Naive thymus-derived CD4-positive, alpha-beta T cell (primary cell): ENCODE measurements at regions of chr4 and their contacts with region 1.

Region 1: DNA sequence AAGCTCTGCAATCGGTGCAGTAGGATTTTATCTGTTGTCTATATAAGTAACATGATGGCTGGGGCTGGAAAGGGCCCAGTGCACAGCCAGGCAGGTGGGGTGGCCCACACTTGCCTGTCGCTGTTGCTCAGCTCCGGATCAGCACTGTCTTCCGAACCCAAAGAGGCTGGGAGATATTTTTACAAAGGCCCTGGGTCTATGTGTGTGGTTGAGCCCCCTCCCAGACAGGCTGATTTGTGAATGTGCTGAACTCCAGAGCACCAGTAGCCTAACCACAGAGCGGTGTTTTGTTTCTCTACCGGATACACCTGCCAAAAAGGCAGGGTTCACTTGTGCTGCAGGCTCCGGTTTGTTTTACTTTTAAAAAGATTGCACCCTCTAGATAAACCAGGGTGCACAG is 33.5 kb upstream of the CHRNA9 start:
- DNase-seq: peak in 8 of 9 donors; percentile 36 to 96 (median 92)
- ATAC-seq: peak; percentile 92
- H3K4me3 ChIP-seq: peak overlapping the region; percentile 17
- H3K4me3 Mint-ChIP-seq: peak overlapping the region; percentile 56 to 88 (median 76)
- H3K27ac ChIP-seq: peak overlapping the region; percentile 74
- H3K27ac Mint-ChIP-seq: peak overlapping the region in 8 of 9 donors; percentile 94 to 99 (median 98)
- H3K4me1 ChIP-seq: peaks cover 87 to 90% of the 10 kb centered on the region in 2 donors
- H3K4me1 Mint-ChIP-seq: peaks cover 60 to 92% (median 82%) of the 10 kb centered on the region in 7 donors
- H3K27me3 ChIP-seq: no peaks in the 10 kb centered on the region
- H3K27me3 Mint-ChIP-seq: no peaks in the 10 kb centered on the region

Region 2: DNA sequence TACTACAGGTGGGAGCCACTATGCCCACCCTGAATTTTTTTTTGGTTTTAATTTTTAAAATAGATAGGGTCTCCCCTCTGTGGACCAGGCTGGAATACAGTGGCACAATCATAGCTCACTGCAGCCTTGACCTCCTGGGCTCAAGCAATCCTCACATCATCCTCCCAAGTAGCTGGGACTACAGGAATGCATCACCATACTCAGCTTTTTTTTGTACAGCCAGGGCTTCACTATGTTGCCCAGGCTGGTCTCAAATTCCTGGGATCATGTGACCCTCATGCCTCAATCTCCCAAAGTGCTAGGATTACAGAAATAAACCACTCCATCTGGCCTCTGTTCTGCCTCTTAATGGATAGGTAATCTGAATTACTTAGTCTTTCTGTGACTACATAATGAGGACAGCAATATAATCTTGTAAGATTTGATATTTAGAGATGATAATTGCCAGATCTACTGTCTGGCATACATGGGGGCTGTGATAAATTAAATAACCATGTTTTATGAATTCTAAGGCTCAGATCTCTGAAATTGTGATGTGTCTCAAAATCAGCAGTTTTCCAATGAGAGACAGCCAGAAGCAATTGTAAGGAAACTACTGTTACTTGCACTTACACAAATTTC is 350.6 kb before region 1 on chr4:
- CTCF ChIA-PET with region 1: no interaction called
- POLR2A ChIA-PET with region 1: no interaction called
- intact Hi-C with region 1: no loop called
- DNase-seq: no peak
- ATAC-seq: no peak
- H3K4me3 ChIP-seq: no peak overlapping the region
- H3K4me3 Mint-ChIP-seq: peak overlapping the region in 1 of 10 donors; percentile 9
- H3K27ac ChIP-seq: no peak overlapping the region
- H3K27ac Mint-ChIP-seq: peak overlapping the region in 6 of 9 donors; percentile 13 to 65 (median 32)
- H3K4me1 ChIP-seq: peaks cover 5% of the 10 kb centered on the region in 2 donors
- H3K4me1 Mint-ChIP-seq: peaks cover 27 to 74% (median 61%) of the 10 kb centered on the region in 7 donors
- H3K27me3 ChIP-seq: no peaks in the 10 kb centered on the region
- H3K27me3 Mint-ChIP-seq: no peaks in the 10 kb centered on the region

Region 3: DNA sequence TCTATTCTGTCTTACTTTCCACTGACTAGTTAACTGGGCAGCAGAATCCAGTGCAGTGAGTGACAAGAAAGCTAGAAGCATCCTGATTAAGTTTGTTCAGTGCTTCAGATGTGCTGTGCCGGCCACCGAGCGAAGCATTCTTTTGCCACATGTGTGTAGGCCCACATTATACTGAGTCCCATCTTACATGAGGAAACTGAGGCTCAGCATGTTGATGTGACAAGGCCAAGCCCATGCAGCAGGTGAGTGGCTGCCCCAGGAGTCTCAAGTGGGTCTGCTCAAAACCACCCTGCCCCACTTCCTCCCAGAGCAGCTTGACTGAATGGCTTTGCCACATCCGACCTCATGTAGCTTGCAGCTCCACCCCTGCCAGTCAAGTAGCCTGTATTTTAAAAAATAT is 54.3 kb before region 1 on chr4:
- CTCF ChIA-PET with region 1: interaction called, 5 read pairs
- POLR2A ChIA-PET with region 1: interaction called, 206 read pairs
- intact Hi-C with region 1: loop called in 1 of 2 experiments (anchors 1 kb)
- DNase-seq: peak in 7 of 9 donors; percentile 68 to 75 (median 73)
- ATAC-seq: peak; percentile 83
- H3K4me3 ChIP-seq: peak overlapping the region; percentile 14
- H3K4me3 Mint-ChIP-seq: peak overlapping the region; percentile 37 to 83 (median 69)
- H3K27ac ChIP-seq: peak overlapping the region; percentile 78
- H3K27ac Mint-ChIP-seq: peak overlapping the region; percentile 84 to 99 (median 96)
- H3K4me1 ChIP-seq: peaks cover 61 to 82% of the 10 kb centered on the region in 2 donors
- H3K4me1 Mint-ChIP-seq: peaks cover 53 to 93% (median 84%) of the 10 kb centered on the region in 7 donors
- H3K27me3 ChIP-seq: no peaks in the 10 kb centered on the region
- H3K27me3 Mint-ChIP-seq: no peaks in the 10 kb centered on the region

Region 4: DNA sequence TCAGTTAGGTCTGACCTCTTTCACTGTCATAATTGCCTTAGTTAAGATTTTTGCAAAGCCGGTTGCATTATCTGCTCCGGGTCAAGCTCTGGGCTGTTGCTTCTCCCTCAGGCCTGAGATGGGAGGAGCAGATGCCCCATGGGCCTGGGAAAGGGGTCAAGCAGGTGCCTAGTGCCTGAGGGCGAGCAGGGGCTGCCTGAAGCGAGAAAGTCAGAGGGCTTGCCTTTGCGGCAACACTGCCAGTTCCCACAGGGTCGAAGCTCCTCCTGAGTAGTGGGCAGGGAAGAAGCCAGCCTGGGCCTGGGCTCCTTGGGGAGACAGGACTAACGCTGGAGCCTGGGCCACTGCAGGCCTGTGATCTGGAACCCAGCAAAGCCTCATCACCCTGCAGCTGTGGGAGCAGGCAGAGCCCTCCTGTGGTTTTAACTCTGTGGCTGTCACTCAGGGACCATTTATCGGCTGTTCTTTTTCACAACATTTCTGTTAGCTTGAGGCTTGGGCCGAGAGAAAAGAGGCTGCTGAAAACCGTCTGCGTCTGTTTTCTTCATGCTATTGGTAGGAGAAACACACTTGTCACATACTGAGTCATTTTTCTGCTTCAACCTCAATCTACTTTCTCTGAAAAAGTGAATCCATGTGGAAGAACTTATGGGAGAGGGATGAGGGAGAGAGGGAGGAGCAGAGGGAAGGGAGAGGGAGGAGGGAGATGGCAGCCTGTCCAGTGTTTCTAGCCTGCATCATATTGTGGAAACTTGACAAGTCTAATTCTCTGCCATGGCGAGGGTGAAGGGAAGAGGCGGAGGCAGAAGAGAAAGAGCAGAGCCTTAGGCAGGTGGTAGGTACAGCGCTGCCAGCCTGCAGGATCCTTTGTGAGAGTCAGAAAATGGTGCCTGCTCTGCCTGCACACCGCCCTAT is 36.4 kb before region 1 on chr4:
- CTCF ChIA-PET with region 1: interaction called, 4 read pairs
- POLR2A ChIA-PET with region 1: interaction called, 206 read pairs
- intact Hi-C with region 1: loop called in 1 of 2 experiments (anchors 1 kb)
- DNase-seq: peak in 5 of 9 donors; percentile 43 to 58 (median 51)
- ATAC-seq: peak; percentile 87
- H3K4me3 ChIP-seq: peak overlapping the region; percentile 22
- H3K4me3 Mint-ChIP-seq: peak overlapping the region; percentile 72 to 89 (median 81)
- H3K27ac ChIP-seq: peak overlapping the region; percentile 77
- H3K27ac Mint-ChIP-seq: peak overlapping the region; percentile 80 to 99 (median 97)
- H3K4me1 ChIP-seq: peaks cover 31 to 53% of the 10 kb centered on the region in 2 donors
- H3K4me1 Mint-ChIP-seq: peaks cover 33 to 88% (median 78%) of the 10 kb centered on the region in 7 donors
- H3K27me3 ChIP-seq: no peaks in the 10 kb centered on the region
- H3K27me3 Mint-ChIP-seq: no peaks in the 10 kb centered on the region

Region 5: GRCh38 chr4:40289366-40290188 is 12.0 kb before region 1 on chr4:
- CTCF ChIA-PET with region 1: interaction called, 18 read pairs
- POLR2A ChIA-PET with region 1: interaction called, 113 read pairs
- intact Hi-C with region 1: loop called in 1 of 2 experiments (anchors 1 kb)
- DNase-seq: peak in 8 of 9 donors; percentile 38 to 75 (median 64)
- ATAC-seq: peak; percentile 89
- H3K4me3 ChIP-seq: peak overlapping the region; percentile 3
- H3K4me3 Mint-ChIP-seq: peak overlapping the region; percentile 35 to 88 (median 70)
- H3K27ac ChIP-seq: peak overlapping the region; percentile 65
- H3K27ac Mint-ChIP-seq: peak overlapping the region in 8 of 9 donors; percentile 83 to 96 (median 92)
- H3K4me1 ChIP-seq: peaks cover 18 to 45% of the 10 kb centered on the region in 2 donors
- H3K4me1 Mint-ChIP-seq: peaks cover 40 to 84% (median 67%) of the 10 kb centered on the region in 7 donors
- H3K27me3 ChIP-seq: no peaks in the 10 kb centered on the region
- H3K27me3 Mint-ChIP-seq: no peaks in the 10 kb centered on the region

Region 6: GRCh38 chr4:40377582-40378550 is 76.3 kb after region 1 on chr4:
- CTCF ChIA-PET with region 1: no interaction called
- POLR2A ChIA-PET with region 1: no interaction called
- intact Hi-C with region 1: no loop called
- DNase-seq: no peak
- ATAC-seq: peak; percentile 38
- H3K4me3 ChIP-seq: no peak overlapping the region
- H3K4me3 Mint-ChIP-seq: no peak overlapping the region
- H3K27ac ChIP-seq: no peak overlapping the region
- H3K27ac Mint-ChIP-seq: no peak overlapping the region
- H3K4me1 ChIP-seq: no peaks in the 10 kb centered on the region
- H3K4me1 Mint-ChIP-seq: peaks cover 0 to 7% (median 0%) of the 10 kb centered on the region in 7 donors
- H3K27me3 ChIP-seq: no peaks in the 10 kb centered on the region
- H3K27me3 Mint-ChIP-seq: peaks cover 0 to 8% (median 0%) of the 10 kb centered on the region in 5 donors